Sigmoid colon (tissue), 7 donors: ENCODE measurements at regions of chr14 and their contacts with region 1.

Region 1: DNA sequence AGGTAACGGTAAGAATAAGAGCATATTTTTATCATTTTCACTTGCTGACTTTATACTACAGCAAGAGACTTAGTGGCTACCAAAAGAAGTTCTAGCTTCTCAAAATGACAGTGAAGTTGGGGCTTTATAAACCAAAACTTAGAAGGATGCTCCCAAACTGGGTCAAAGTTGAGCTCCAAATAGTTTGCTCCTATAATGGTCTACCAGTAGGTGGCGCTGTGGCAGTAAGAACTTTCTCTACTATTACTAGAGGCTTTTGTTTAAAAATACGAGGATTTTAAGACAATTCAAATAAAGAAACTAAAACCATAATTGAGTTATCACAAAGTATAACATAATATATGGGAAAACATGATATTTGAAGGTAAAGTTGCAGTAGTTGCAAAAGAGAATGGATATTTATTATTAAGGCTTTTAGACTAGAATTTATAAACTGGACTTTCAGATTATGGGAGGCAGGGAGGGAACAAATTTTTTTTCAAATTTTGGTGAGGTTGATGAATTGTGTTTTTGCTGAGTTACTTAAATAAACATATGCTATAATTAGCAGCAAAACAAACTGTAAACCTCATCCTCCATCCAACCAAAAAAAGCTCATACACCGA is 75.0 kb downstream of the TGFB3 start:
- DNase-seq: peak; percentile 81
- H3K4me3 ChIP-seq: no peak overlapping the region
- H3K27ac ChIP-seq: peak overlapping the region in 1 of 4 donors; percentile 30
- H3K4me1 ChIP-seq: peaks cover 0 to 13% (median 3%) of the 10 kb centered on the region in 4 donors
- H3K27me3 ChIP-seq: no peaks in the 10 kb centered on the region
- CTCF ChIP-seq: peak; percentile 54 to 90 (median 72)
- EP300 ChIP-seq: no peak
- POLR2A ChIP-seq: no peak

Region 2: DNA sequence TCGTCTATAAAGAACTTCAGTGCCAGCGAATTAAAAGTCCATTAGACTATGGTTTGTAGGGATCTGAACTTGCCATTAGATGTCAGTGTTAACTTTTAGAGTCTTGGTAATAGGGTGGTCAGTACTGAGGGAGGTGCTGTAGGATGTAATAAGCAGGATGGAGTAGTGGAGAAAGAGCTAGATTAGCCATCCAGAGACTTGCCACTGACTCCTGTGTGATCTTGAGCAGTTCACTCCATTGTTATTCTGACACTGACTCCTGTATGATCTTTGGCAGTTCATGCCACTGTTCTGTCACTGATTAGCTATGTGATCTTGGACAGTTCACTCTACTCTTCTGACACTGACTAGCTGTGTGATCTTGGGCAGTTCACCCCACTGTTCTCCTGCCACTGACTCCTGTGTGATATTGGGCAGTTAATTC is 112.2 kb before region 1 on chr14:
- intact Hi-C with region 1: loop called (anchors 5 kb)
- DNase-seq: no peak
- H3K4me3 ChIP-seq: no peak overlapping the region
- H3K27ac ChIP-seq: peak overlapping the region in 3 of 4 donors; percentile 31 to 57 (median 39)
- H3K4me1 ChIP-seq: peaks cover 0 to 10% (median 1%) of the 10 kb centered on the region in 4 donors
- H3K27me3 ChIP-seq: no peaks in the 10 kb centered on the region
- CTCF ChIP-seq: peak in 3 of 4 experiments; percentile 32 to 37 (median 34)
- EP300 ChIP-seq: no peak
- POLR2A ChIP-seq: no peak

Region 3: DNA sequence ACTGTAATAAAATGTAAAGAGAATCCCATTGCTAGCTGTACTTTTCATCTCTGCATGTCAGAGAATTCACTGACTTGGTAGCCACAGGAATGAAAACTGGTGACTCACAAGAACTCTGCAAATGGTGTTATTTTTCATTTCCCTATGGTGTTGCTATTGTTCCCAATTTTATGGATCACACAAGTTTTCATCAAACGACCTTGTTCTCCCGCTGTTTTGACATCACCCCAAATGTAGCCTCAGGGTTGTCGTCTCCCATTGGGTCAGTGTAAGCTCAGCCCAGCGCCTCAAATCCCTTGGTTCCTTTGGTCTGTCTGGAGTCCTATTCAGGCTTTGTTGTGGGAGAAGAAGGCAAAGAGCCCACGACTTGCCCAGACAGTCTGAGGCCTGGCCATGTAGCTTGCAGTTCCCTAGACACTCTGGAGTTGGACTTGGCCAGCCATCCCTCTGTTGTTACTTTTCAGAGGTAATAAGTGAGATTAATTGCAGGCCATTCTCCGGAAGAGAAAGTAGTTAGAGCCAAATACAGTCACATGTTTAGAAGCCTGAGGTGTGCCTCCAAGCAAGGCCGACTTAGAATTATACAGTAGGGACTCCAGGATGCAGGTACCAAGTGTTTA is 84.1 kb before region 1 on chr14:
- intact Hi-C with region 1: loop called (anchors 5 kb)
- DNase-seq: peak; percentile 69
- H3K4me3 ChIP-seq: no peak overlapping the region
- H3K27ac ChIP-seq: peak overlapping the region; percentile 51 to 84 (median 72)
- H3K4me1 ChIP-seq: peaks cover 0 to 56% (median 46%) of the 10 kb centered on the region in 4 donors
- H3K27me3 ChIP-seq: no peaks in the 10 kb centered on the region
- CTCF ChIP-seq: no peak
- EP300 ChIP-seq: no peak
- POLR2A ChIP-seq: no peak

Region 4: GRCh38 chr14:75982266-75983018 is 75.7 kb after region 1 on chr14:
- intact Hi-C with region 1: loop called (anchors 1 kb)
- DNase-seq: peak; percentile 92
- H3K4me3 ChIP-seq: peak overlapping the region; percentile 60 to 81 (median 74)
- H3K27ac ChIP-seq: peak overlapping the region; percentile 94 to 99 (median 96)
- H3K4me1 ChIP-seq: peaks cover 0 to 68% (median 58%) of the 10 kb centered on the region in 4 donors
- H3K27me3 ChIP-seq: no peaks in the 10 kb centered on the region
- CTCF ChIP-seq: peak in 3 of 4 experiments; percentile 34 to 77 (median 47)
- EP300 ChIP-seq: no peak
- POLR2A ChIP-seq: no peak